Dendritic cell treated with granulocyte-macrophage colony-stimulating factor and Interleukin-4, amounts not matched to agents 40 ng/mL and 50 ng/mL, for 4 days (primary cell): ENCODE measurements at regions of chr15 and their contacts with region 1.

Region 1: GRCh38 chr15:48861813-48862431 is 16.0 kb upstream of the EID1 start:
- H3K4me3 Mint-ChIP-seq: no peak overlapping the region
- H3K27ac Mint-ChIP-seq: no peak overlapping the region
- H3K4me1 Mint-ChIP-seq: peaks cover 13% of the 10 kb centered on the region
- H3K27me3 Mint-ChIP-seq: no peaks in the 10 kb centered on the region

Region 2: DNA sequence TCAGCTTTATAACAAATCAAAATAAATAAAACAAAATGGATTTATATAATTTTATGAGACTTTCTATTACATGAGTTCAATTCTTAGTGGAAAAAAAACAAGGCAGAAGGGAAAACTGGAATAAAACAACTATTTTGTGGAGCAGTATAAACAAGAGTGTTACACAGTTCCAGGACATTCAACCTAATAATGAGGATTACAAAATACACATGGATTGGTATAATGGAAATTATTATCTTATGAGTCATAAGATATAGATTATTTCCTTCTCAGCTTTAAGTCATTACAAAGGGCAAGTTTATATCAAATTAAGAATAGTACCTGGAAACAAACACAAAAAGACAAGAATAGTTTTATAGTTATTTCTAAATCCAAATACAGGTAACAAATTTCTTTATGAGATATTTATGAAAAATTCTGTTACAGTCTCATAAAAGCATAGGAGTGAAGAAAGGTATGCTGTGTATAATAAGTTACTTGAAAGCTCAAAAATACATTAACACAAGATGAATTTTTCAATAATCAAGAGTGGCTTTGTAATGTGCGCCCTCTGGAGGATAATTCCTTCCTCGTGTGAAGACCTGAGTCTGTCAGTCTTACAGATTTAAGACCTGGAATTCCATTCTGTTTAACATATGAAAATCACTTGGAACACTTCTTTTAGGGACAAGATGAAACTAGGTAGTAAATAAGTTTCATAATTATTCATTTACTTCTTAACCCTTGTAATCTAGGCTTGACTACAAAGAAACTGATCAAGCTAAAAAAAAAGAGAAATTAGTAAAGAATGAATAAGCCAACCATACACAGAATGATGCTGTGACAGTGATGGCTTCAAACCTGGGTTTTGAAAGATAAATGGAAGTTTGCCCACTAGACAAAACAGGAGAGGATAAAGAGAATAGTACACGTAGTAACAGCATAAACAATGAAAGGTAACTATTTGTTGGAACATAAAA is 284.0 kb after region 1 on chr15:
- intact Hi-C with region 1: loop called (anchors 5 kb)
- H3K4me3 Mint-ChIP-seq: no peak overlapping the region
- H3K27ac Mint-ChIP-seq: no peak overlapping the region
- H3K4me1 Mint-ChIP-seq: peaks cover 28% of the 10 kb centered on the region
- H3K27me3 Mint-ChIP-seq: no peaks in the 10 kb centered on the region

Region 3: GRCh38 chr15:49421991-49422390 is 560.1 kb after region 1 on chr15:
- intact Hi-C with region 1: loop called (anchors 5 kb)
- H3K4me3 Mint-ChIP-seq: no peak overlapping the region
- H3K27ac Mint-ChIP-seq: no peak overlapping the region
- H3K4me1 Mint-ChIP-seq: no peaks in the 10 kb centered on the region
- H3K27me3 Mint-ChIP-seq: no peaks in the 10 kb centered on the region

Region 4: DNA sequence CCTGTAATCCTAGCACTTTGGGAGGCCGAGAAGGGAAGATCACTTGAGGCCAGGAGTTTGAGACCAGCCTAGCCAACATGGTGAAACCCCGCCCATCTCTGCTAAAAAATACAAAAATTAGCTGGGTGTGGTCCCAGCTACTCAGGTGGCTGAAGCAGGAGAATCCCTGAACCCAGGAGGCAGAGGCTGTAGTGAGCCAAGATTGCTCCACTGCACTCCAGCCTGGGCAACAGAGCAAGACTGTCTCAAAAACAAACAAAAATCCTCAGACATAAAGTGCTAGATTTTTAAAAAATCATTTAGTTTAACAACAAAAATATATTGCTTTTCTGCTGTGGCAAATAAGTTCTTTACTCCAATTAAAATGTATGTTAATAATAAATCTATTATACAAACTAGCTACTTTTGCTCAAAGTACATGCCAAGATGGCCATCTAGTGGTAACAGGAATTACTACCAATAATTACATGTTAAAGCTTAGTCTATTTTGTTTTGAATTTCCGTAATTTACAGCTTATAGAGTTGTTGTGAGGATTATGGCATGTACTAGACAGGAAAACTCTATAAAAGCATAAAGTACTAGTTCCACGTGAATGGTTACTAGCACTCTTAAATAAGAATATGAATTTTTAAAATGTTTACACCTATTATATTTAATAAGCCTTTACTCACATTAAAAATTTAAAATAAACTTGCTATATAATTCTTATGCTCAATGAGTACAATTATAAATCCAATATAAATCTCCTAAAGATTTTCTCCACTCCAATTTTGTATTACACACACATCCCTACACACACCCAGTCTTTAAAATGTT is 1454.1 kb after region 1 on chr15:
- intact Hi-C with region 1: loop called (anchors 5 kb)
- H3K4me3 Mint-ChIP-seq: no peak overlapping the region
- H3K27ac Mint-ChIP-seq: no peak overlapping the region
- H3K4me1 Mint-ChIP-seq: no peaks in the 10 kb centered on the region
- H3K27me3 Mint-ChIP-seq: no peaks in the 10 kb centered on the region